ENCODE measurements at regions of chr7 and their contacts with region 1.

Region 1: GRCh38 chr7:1579481-1580421 is 9.9 kb upstream of the PSMG3 start:
- DNase-seq: peak; percentile 73 to 88
- ATAC-seq: peak; percentile 90 to 99 (median 93)
- H3K4me3 ChIP-seq: no peak overlapping the region
- H3K27ac ChIP-seq: no peak overlapping the region
- H3K4me1 ChIP-seq: no peaks in the 10 kb centered on the region
- H3K27me3 ChIP-seq: no peaks in the 10 kb centered on the region
- CTCF ChIP-seq: peak; percentile 85

Region 2: GRCh38 chr7:1709900-1710299 is 130.1 kb after region 1 on chr7:
- intact Hi-C with region 1: loop called in 1 of 2 experiments (anchors 5 kb)
- DNase-seq: no peak
- ATAC-seq: no peak
- H3K4me3 ChIP-seq: no peak overlapping the region
- H3K27ac ChIP-seq: no peak overlapping the region
- H3K4me1 ChIP-seq: peaks cover 9% of the 10 kb centered on the region
- H3K27me3 ChIP-seq: no peaks in the 10 kb centered on the region
- CTCF ChIP-seq: peak; percentile 22

Region 3: GRCh38 chr7:1758028-1758858 is 178.5 kb after region 1 on chr7:
- intact Hi-C with region 1: loop called (anchors 2 kb)
- DNase-seq: peak in 1 of 2 donors; percentile 76
- ATAC-seq: peak; percentile 80 to 95 (median 93)
- H3K4me3 ChIP-seq: no peak overlapping the region
- H3K27ac ChIP-seq: no peak overlapping the region
- H3K4me1 ChIP-seq: peaks cover 7% of the 10 kb centered on the region
- H3K27me3 ChIP-seq: peaks cover 0 to 24% (median 0%) of the 10 kb centered on the region in 3 donors
- CTCF ChIP-seq: peak; percentile 48

Region 4: GRCh38 chr7:2063575-2064257 is 484.0 kb after region 1 on chr7:
- intact Hi-C with region 1: no loop called
- DNase-seq: no peak
- ATAC-seq: peak; percentile 31 to 54 (median 38)
- H3K4me3 ChIP-seq: no peak overlapping the region
- H3K27ac ChIP-seq: no peak overlapping the region
- H3K4me1 ChIP-seq: peaks cover 6% of the 10 kb centered on the region
- H3K27me3 ChIP-seq: no peaks in the 10 kb centered on the region
- CTCF ChIP-seq: peak; percentile 20

Region 5: GRCh38 chr7:2209146-2209960 is 629.6 kb after region 1 on chr7:
- intact Hi-C with region 1: loop called (anchors 5 kb)
- DNase-seq: peak; percentile 75 to 85
- ATAC-seq: peak; percentile 88 to 96 (median 91)
- H3K4me3 ChIP-seq: no peak overlapping the region
- H3K27ac ChIP-seq: no peak overlapping the region
- H3K4me1 ChIP-seq: no peaks in the 10 kb centered on the region
- H3K27me3 ChIP-seq: no peaks in the 10 kb centered on the region
- CTCF ChIP-seq: peak; percentile 78

Region 6: DNA sequence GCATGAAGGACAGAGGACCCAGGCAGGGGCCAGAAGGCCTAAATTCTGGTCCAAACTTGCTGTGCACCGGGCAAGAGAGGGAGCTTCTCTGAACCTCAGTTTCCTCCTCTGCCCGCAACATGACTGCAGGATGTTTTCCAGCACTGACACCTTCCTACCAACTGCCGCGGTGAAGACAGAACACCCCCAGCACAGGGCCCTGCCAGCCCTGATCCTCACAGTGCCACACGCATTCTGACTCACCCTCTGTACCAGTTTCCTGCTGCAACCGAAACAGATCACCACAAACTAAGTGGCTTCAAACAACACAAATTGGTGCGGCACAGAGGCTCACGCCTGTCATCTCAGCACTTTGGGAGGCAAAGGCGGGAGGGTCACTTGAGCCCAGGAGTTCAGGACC is 634.9 kb after region 1 on chr7:
- intact Hi-C with region 1: loop called (anchors 5 kb)
- DNase-seq: peak in 1 of 2 donors; percentile 5
- ATAC-seq: no peak
- H3K4me3 ChIP-seq: no peak overlapping the region
- H3K27ac ChIP-seq: no peak overlapping the region
- H3K4me1 ChIP-seq: no peaks in the 10 kb centered on the region
- H3K27me3 ChIP-seq: no peaks in the 10 kb centered on the region
- CTCF ChIP-seq: no peak

Region 7: GRCh38 chr7:2354186-2354938 is 774.6 kb after region 1 on chr7 and contains the start of gene EIF3B:
- intact Hi-C with region 1: loop called in 1 of 2 experiments (anchors 5 kb)
- DNase-seq: peak; percentile 91 to 96
- ATAC-seq: peak; percentile 92 to 93 (median 93)
- H3K4me3 ChIP-seq: peak within 1 kb of the TSS; percentile 98
- H3K27ac ChIP-seq: peak within 1 kb of the TSS; percentile 100
- H3K4me1 ChIP-seq: peaks cover 34% of the 10 kb centered on the region
- H3K27me3 ChIP-seq: no peaks in the 10 kb centered on the region
- CTCF ChIP-seq: no peak
- total RNA-seq, gene EIF3B: 101 to 203 (median 180) TPM

Measured in psoas muscle (tissue), 8 donors.